HAP-1 (cell line): ENCODE measurements at regions of chr4 and their contacts with region 1.

Region 1: GRCh38 chr4:15396157-15396800 is 31.6 kb upstream of the C1QTNF7 start:
- DNase-seq: peak; percentile 51 to 70
- H3K4me3 ChIP-seq: no peak overlapping the region
- H3K4me1 ChIP-seq: peaks cover 7% of the 10 kb centered on the region; the same call in 1 of the 2 replicates
- H3K27me3 ChIP-seq: no peaks in the 10 kb centered on the region

Region 2: DNA sequence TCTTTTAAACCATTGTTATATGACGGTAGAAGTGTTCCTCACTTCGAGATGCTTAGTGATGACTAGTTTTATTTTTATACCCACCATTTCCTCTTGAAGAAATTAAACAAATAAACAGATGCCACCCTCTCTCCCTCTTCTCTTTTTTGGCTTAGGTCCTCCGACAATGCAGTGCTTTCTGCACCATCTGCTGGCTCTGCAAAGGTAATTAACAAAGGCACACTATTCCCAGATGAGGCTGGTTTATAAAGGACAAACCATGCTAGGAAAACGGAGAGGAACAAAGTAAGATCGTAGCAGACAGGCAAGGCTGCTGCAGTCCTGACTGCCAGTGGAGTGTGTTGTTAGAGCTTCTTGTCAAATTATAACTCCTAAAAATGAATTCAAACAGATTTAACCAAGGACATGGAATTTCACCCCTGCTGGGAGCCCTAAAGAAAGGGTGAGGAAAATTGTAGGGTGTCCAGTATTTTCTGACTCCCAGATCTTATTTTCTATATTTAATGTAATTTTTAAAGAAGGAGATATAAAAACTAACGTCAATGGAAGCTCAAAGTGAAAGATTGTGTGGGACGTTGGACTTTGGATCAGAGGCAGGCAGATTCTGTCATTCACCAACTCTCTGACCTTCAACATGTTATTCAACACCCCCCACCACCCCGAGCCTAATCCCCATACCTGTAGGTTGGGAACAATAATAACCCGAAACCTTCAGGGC is 251.9 kb before region 1 on chr4:
- in situ Hi-C with region 1: no loop called
- DNase-seq: no peak
- H3K4me3 ChIP-seq: no peak overlapping the region
- H3K4me1 ChIP-seq: peaks cover 5% of the 10 kb centered on the region
- H3K27me3 ChIP-seq: no peaks in the 10 kb centered on the region

Region 3: DNA sequence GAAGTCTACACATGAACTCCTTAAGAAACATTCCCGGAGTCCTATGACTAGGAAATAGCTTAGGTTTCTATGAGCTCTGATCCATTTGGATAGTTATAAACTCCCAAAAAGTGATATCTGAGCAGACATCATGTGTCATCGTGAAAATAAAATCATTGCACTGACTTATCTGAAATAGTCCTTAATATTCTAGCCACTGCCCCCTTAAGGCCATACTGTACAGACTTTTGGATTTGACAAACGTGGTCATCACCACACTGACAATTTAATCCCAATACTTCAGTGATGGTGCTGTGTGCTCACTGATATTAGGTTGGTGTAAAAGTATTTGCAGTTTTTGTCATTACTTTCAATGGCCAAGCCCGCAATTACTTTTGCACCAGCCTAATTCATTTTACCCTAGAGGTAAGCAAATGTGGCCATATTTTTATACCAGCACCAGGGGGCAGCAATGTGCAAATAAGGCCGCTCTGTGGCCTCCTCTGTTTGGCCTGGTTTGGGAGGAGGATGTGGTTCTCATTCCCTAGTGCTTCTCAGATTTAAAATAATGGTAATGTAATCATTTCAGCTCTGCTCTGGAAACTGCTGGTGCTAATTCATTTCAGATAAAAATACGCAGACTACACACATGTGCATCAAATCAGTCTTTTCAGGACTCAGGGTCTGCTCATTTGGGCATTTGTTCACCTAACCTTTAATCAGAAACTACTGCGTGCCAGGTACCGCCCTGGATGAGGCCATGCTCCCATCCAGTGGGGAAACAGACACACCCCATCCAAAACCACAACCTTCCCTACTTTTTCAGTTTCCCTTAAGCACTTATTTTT is 164.8 kb before region 1 on chr4:
- in situ Hi-C with region 1: loop called (anchors 10 kb)
- DNase-seq: peak; percentile 30 to 84
- H3K4me3 ChIP-seq: no peak overlapping the region
- H3K4me1 ChIP-seq: no peaks in the 10 kb centered on the region
- H3K27me3 ChIP-seq: no peaks in the 10 kb centered on the region

Region 4: GRCh38 chr4:15587649-15588048 is 191.4 kb after region 1 on chr4:
- in situ Hi-C with region 1: no loop called
- DNase-seq: no peak
- H3K4me3 ChIP-seq: no peak overlapping the region
- H3K4me1 ChIP-seq: peaks cover 17% of the 10 kb centered on the region
- H3K27me3 ChIP-seq: no peaks in the 10 kb centered on the region